Gastrocnemius medialis (tissue), 4 donors: ENCODE measurements at regions of chr6 and their contacts with region 1.

Region 1: GRCh38 chr6:14681699-14682487 is 564.0 kb upstream of the JARID2 start:
- DNase-seq: no peak
- ATAC-seq: no peak
- H3K4me3 ChIP-seq: no peak overlapping the region
- H3K27ac ChIP-seq: no peak overlapping the region
- H3K4me1 ChIP-seq: no peaks in the 10 kb centered on the region
- H3K27me3 ChIP-seq: no peaks in the 10 kb centered on the region
- CTCF ChIP-seq: no peak
- POLR2A ChIP-seq: no peak

Region 2: GRCh38 chr6:14452567-14453527 is 229.0 kb before region 1 on chr6:
- in situ Hi-C with region 1: no loop called
- intact Hi-C with region 1: no loop called
- DNase-seq: no peak
- ATAC-seq: peak in 1 of 2 donors; percentile 24
- H3K4me3 ChIP-seq: no peak overlapping the region
- H3K27ac ChIP-seq: no peak overlapping the region
- H3K4me1 ChIP-seq: peaks cover 12 to 16% of the 10 kb centered on the region in 2 donors
- H3K27me3 ChIP-seq: no peaks in the 10 kb centered on the region
- CTCF ChIP-seq: no peak
- POLR2A ChIP-seq: no peak

Region 3: GRCh38 chr6:14747881-14748520 is 66.1 kb after region 1 on chr6:
- in situ Hi-C with region 1: no loop called
- intact Hi-C with region 1: no loop called
- DNase-seq: no peak
- ATAC-seq: no peak
- H3K4me3 ChIP-seq: no peak overlapping the region
- H3K27ac ChIP-seq: no peak overlapping the region
- H3K4me1 ChIP-seq: no peaks in the 10 kb centered on the region
- H3K27me3 ChIP-seq: peaks cover 0 to 4% (median 0%) of the 10 kb centered on the region in 3 donors
- CTCF ChIP-seq: no peak
- POLR2A ChIP-seq: no peak

Region 4: GRCh38 chr6:14758421-14759081 is 76.7 kb after region 1 on chr6:
- in situ Hi-C with region 1: no loop called
- intact Hi-C with region 1: loop called (anchors 2 kb)
- DNase-seq: no peak
- ATAC-seq: no peak
- H3K4me3 ChIP-seq: no peak overlapping the region
- H3K27ac ChIP-seq: no peak overlapping the region
- H3K4me1 ChIP-seq: no peaks in the 10 kb centered on the region
- H3K27me3 ChIP-seq: no peaks in the 10 kb centered on the region
- CTCF ChIP-seq: no peak
- POLR2A ChIP-seq: no peak

Region 5: GRCh38 chr6:14876778-14877613 is 195.1 kb after region 1 on chr6:
- in situ Hi-C with region 1: no loop called
- intact Hi-C with region 1: no loop called
- DNase-seq: peak in 1 of 2 donors; percentile 48
- ATAC-seq: peak; percentile 91 to 93
- H3K4me3 ChIP-seq: peak overlapping the region in 2 of 4 donors; percentile 14 to 26
- H3K27ac ChIP-seq: peak overlapping the region; percentile 75 to 88 (median 76)
- H3K4me1 ChIP-seq: peaks cover 24 to 46% of the 10 kb centered on the region in 2 donors
- H3K27me3 ChIP-seq: no peaks in the 10 kb centered on the region
- CTCF ChIP-seq: no peak
- POLR2A ChIP-seq: peak in 1 of 2 donors; percentile 44